ENCODE measurements at regions of chr13 and their contacts with region 1.

Region 1: GRCh38 chr13:49421391-49421790 is 22.5 kb downstream of the CAB39L start:
- DNase-seq: no peak
- ATAC-seq: peak in 2 of 4 donors; percentile 20 to 65
- H3K4me3 ChIP-seq: no peak overlapping the region
- H3K27ac ChIP-seq: no peak overlapping the region
- H3K4me1 ChIP-seq: peaks cover 0 to 3% (median 0%) of the 10 kb centered on the region in 12 donors
- H3K27me3 ChIP-seq: no peaks in the 10 kb centered on the region
- CTCF ChIP-seq: no peak
- POLR2A ChIP-seq: no peak

Region 2: GRCh38 chr13:49314344-49314882 is 107.0 kb before region 1 on chr13:
- intact Hi-C with region 1: loop called in 1 of 10 experiments (anchors 10 kb)
- DNase-seq: no peak
- ATAC-seq: peak; percentile 5 to 55 (median 8)
- H3K4me3 ChIP-seq: no peak overlapping the region
- H3K27ac ChIP-seq: peak overlapping the region in 11 of 12 donors; percentile 9 to 76 (median 64)
- H3K4me1 ChIP-seq: peaks cover 0 to 15% (median 5%) of the 10 kb centered on the region in 12 donors
- H3K27me3 ChIP-seq: no peaks in the 10 kb centered on the region
- CTCF ChIP-seq: no peak
- POLR2A ChIP-seq: no peak